A673 (cell line): ENCODE measurements at regions of chr12 and their contacts with region 1.

Region 1: GRCh38 chr12:79737875-79738718 is 47.3 kb upstream of the PAWR start:
- DNase-seq: peak; percentile 72
- H3K4me3 ChIP-seq: no peak overlapping the region
- H3K27ac ChIP-seq: no peak overlapping the region
- H3K4me1 ChIP-seq: no peaks in the 10 kb centered on the region
- H3K27me3 ChIP-seq: no peaks in the 10 kb centered on the region
- CTCF ChIP-seq: peak; percentile 76

Region 2: DNA sequence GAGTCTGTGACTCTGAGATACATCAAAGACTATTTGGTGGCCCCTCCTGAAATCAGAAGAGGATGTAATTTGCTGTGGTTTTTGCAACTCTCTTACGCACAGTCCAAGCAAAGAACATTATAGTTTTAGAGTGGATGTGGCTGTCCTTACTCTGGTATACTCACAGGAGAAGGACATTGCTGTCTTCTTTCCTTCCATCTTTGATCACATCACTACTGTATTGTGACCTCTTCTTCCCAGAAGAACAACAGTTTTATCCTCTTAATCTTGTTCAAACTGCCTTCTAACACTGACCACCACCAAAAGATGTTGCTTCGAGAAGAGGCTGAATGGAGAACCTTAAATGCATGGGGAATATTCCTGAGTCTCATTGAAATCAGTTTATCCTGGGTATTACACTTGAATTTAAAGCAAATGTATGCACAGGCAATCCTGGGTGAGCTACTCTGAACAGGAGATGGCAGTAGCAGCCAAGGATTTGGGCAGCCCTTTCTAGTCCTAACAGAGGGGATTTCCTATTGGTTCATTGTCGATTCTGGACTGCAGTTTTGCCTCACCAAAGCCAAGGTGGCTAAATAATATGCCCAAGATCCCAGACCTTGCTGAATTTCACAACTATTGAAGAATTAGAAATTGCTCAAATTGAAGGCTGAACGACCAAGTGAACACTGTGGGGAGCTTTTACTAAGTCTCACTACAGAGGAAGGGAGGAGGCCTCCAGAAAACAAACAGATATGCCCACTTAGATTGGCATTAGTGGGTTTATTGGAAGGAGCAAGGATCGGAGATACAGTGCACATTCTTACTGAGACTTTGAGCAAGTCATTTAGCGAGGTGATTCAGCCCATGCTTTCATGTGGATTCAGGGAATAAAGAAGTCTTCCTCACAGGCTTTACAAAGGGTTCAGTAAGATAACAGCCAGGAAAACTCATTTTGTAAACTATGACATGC is 330.1 kb before region 1 on chr12:
- CTCF ChIA-PET with region 1: no interaction called
- POLR2A ChIA-PET with region 1: no interaction called
- intact Hi-C with region 1: loop called (anchors 1 kb)
- DNase-seq: peak; percentile 81
- H3K4me3 ChIP-seq: no peak overlapping the region
- H3K27ac ChIP-seq: no peak overlapping the region
- H3K4me1 ChIP-seq: peaks cover 21% of the 10 kb centered on the region
- H3K27me3 ChIP-seq: no peaks in the 10 kb centered on the region
- CTCF ChIP-seq: peak; percentile 77

Region 3: GRCh38 chr12:79454338-79454843 is 283.7 kb before region 1 on chr12:
- CTCF ChIA-PET with region 1: no interaction called
- POLR2A ChIA-PET with region 1: no interaction called
- intact Hi-C with region 1: no loop called
- DNase-seq: no peak
- H3K4me3 ChIP-seq: no peak overlapping the region
- H3K27ac ChIP-seq: no peak overlapping the region
- H3K4me1 ChIP-seq: no peaks in the 10 kb centered on the region
- H3K27me3 ChIP-seq: no peaks in the 10 kb centered on the region
- CTCF ChIP-seq: no peak

Region 4: DNA sequence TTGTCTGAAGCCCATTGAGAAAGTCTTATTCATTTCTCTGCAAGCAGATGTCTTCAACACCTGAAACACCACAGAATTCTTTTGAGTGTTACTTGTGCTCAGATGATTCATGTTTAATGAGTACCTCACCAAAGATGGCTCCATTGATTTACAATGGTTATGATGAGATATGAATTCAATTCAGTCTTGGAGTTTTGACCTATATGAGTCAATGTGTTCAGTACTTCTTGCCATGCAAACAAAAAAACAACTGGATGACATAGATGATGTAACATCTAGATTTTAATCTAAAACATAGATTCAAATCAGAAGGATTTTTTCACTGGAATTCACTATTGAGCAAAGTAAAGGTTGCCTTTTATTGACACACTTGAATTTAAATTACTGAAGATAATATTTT is 31.9 kb before region 1 on chr12:
- CTCF ChIA-PET with region 1: no interaction called
- POLR2A ChIA-PET with region 1: no interaction called
- intact Hi-C with region 1: no loop called
- DNase-seq: no peak
- H3K4me3 ChIP-seq: no peak overlapping the region
- H3K27ac ChIP-seq: no peak overlapping the region
- H3K4me1 ChIP-seq: no peaks in the 10 kb centered on the region
- H3K27me3 ChIP-seq: no peaks in the 10 kb centered on the region
- CTCF ChIP-seq: no peak